GM10248 (cell line): ENCODE measurements at regions of chr2 and their contacts with region 1.

Region 1: GRCh38 chr2:76599732-76600368 is 889.1 kb upstream of the GCFC2 start:
- DNase-seq: peak; percentile 53
- CTCF ChIP-seq: peak; percentile 76

Region 2: GRCh38 chr2:75634945-75635344 is 964.9 kb before region 1 on chr2:
- CTCF ChIA-PET with region 1: interaction called, 10 read pairs
- POLR2A ChIA-PET with region 1: no interaction called
- DNase-seq: no peak
- CTCF ChIP-seq: no peak

Region 3: DNA sequence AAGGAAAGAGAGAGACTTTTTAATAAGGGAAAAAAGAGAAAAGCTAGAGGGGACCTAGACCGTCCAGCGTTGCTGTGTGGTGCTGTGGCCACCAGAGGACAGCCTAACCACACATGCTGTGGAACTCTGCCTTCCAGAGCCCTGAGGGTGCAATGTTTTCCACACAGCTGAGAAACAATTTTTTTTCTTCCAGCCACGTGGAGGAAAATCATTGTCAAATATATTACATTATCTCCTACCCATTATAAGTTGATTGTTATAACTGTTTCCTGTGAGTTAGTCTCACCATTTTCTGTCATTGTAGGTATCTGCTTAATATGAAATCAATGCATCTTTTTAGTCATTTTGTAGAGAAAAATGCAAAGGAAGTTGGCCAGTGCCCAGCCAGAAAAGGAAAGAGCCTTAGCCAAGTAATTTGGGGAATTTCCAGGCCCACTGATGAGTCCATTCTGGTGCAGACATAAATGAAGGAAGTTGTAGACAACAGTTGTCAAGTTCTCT is 959.2 kb before region 1 on chr2:
- CTCF ChIA-PET with region 1: interaction called, 10 read pairs
- POLR2A ChIA-PET with region 1: no interaction called
- DNase-seq: peak; percentile 51
- CTCF ChIP-seq: peak; percentile 97

Region 4: GRCh38 chr2:75729861-75730260 is 870.0 kb before region 1 on chr2:
- CTCF ChIA-PET with region 1: interaction called, 12 read pairs
- POLR2A ChIA-PET with region 1: no interaction called
- DNase-seq: no peak
- CTCF ChIP-seq: peak; percentile 9

Region 5: DNA sequence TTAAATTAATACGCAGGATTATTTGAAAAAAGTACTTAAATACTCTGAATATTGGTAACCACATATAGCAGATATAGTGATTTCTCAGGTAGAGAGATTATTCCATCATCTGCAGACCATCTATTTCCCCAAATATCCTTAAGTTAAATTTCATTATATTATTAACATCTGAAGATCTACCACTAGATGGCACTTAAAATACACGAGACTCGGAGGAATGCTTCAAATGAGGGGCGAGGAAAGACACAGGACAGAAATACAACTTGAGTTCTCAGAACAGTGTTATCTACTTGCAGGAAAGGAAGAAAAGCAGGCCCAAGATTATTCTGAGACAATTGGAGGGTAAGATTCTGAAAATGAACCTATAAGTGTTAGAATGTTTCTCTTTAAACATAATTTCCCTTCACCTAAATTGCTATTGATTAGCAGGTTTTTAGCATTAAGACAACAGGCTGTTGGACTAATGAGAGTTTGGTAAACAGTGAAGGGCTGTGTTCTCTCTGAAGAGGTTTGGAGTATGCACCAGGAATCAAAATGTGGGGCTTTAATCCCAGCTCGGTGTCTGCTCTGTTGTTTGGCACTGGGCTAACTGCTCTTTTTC is 812.2 kb before region 1 on chr2:
- CTCF ChIA-PET with region 1: interaction called, 12 read pairs
- POLR2A ChIA-PET with region 1: no interaction called
- DNase-seq: peak; percentile 17
- CTCF ChIP-seq: peak; percentile 29

Region 6: DNA sequence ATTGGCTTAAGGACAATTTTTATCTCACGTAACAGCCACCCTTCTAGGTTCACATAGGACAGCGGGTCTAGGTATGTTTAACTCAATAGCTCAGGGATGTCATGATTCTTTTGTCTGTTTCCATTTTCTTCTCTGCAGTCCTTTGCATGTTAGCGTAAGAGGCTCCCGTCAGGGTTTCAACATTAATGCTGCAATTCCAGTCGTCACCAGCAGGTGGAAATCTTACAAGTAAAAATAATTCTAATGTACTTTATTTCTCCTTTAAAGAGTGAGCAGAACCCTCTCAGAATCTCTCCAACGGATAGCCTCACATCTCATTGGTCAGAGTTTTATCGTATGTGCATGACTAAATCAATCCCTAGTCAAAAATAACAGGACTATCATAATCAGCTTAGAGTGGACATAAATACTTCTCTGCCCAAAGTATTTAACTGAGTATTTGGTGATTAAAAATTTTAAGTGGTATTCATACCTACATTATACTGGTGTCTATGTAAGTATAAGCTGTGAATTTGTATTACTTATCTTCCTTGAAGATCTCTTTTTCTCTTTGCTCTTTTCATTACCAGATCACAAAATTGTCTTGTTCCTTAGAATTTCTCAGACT is 401.9 kb before region 1 on chr2:
- CTCF ChIA-PET with region 1: interaction called, 24 read pairs
- POLR2A ChIA-PET with region 1: no interaction called
- DNase-seq: peak; percentile 11
- CTCF ChIP-seq: peak; percentile 72

Region 7: DNA sequence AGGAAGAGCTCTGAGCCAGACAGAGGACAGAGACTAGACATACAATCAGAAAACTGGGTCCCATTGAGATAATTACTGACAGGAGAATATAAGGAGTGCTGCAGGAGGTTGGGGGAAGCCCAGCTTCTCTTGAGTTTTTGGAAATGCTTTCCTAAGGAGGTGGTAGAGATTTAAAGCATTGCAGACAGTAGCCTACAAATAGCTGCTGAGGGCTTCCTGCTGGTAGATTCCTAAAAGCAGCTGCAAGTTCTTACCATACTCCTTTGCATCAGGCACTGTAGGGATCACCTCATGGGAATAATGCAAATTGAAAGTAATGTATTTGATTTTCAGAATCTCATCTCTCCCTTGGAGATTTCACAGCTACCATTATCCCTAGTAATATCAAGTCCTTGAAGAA is 13.5 kb after region 1 on chr2:
- CTCF ChIA-PET with region 1: interaction called, 11 read pairs
- POLR2A ChIA-PET with region 1: no interaction called
- DNase-seq: no peak
- CTCF ChIP-seq: no peak

Region 8: DNA sequence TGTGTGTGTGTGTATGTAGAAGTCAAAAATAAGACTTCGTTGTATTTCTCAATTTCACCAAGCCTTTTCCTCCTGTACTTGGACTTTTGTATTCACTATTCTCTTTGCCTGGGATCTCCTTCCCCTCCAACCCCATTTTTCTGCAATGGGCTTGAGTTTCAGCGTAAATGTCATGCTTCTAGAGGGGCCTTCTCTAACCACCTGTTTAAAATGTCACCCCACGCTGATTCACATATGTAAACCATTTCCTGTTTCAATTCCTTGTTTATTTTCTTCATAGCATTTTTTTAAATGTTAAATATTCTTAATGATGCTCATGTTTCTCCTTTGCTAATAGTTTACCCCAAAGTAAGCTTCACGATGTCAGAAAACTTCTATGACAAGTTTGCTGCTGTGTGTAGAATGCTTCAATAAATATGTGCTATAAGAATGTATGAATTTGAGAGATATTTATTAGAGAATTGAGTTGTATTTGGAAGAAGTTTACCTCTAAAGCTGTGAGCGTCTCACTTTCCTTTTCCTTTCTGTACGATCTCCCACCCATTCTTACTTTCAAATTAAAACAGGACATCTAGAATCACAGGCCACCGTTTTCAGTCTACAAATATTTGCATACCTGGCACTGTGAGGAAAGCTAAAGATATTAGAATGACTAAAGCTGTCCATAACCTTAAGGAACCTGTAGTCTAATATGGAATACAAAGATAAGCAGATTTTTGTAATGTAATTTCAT is 159.9 kb after region 1 on chr2:
- CTCF ChIA-PET with region 1: no interaction called
- POLR2A ChIA-PET with region 1: no interaction called
- DNase-seq: no peak
- CTCF ChIP-seq: no peak